Activated naive CD4-positive, alpha-beta T cell treated with anti-CD3 and anti-CD28 coated beads for 36 hours (primary cell): ENCODE measurements at regions of chr12 and their contacts with region 1.

Region 1: GRCh38 chr12:7859552-7859951 is 13.2 kb downstream of the SLC2A14 start:
- DNase-seq: no peak
- H3K4me3 Mint-ChIP-seq: no peak overlapping the region
- H3K27ac Mint-ChIP-seq: no peak overlapping the region
- H3K4me1 Mint-ChIP-seq: peaks cover 11% of the 10 kb centered on the region
- H3K27me3 Mint-ChIP-seq: no peaks in the 10 kb centered on the region

Region 2: DNA sequence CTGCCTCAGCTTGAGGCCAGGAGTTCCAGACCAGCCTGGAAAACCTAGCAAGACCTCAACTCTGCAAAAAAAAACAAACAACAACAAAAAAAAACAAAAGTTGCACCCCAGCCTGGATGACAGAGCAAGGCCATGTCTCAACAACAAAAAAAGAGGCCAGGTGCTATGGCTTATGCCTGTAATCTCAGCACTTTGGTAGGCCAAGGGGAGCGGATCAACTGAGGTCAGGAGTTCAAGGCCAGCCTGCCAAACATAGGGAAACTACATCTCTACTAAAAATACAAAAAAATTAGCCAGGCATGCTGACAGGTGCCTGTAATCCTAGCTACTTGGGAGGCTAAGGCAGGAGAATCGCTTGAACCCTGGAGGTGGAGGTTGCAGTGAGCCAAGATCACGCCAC is 19.7 kb after region 1 on chr12:
- CTCF ChIA-PET with region 1: no interaction called
- intact Hi-C with region 1: no loop called
- DNase-seq: no peak
- H3K4me3 Mint-ChIP-seq: no peak overlapping the region
- H3K27ac Mint-ChIP-seq: no peak overlapping the region
- H3K4me1 Mint-ChIP-seq: no peaks in the 10 kb centered on the region
- H3K27me3 Mint-ChIP-seq: no peaks in the 10 kb centered on the region

Region 3: GRCh38 chr12:7899755-7900154 is 40.2 kb after region 1 on chr12:
- CTCF ChIA-PET with region 1: interaction called, 10 read pairs
- intact Hi-C with region 1: no loop called
- DNase-seq: no peak
- H3K4me3 Mint-ChIP-seq: no peak overlapping the region
- H3K27ac Mint-ChIP-seq: no peak overlapping the region
- H3K4me1 Mint-ChIP-seq: no peaks in the 10 kb centered on the region
- H3K27me3 Mint-ChIP-seq: no peaks in the 10 kb centered on the region

Region 4: DNA sequence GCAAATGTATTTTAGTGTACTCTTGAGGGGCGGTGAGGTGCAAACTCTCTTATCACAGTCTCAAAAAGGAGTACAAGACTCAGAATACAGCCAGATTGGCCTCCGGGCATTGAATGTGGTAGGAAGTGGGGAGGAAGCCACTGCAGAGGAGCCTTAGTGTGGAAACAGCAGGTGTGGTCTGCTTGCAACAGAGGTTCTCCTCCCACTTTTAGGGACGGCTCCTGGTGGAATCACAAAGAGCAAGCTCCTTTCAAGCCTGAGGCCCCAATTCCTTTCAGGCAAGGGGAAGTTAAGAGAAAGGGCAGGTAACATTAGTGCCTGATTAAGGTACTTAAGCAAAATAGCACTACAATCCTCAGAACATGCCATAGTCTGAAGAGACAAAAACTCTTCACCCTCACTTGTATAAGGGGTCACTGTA is 100.2 kb after region 1 on chr12:
- CTCF ChIA-PET with region 1: interaction called, 4 read pairs
- intact Hi-C with region 1: loop called (anchors 1 kb)
- DNase-seq: peak; percentile 68
- H3K4me3 Mint-ChIP-seq: peak overlapping the region; percentile 86
- H3K27ac Mint-ChIP-seq: peak overlapping the region; percentile 93
- H3K4me1 Mint-ChIP-seq: peaks cover 37% of the 10 kb centered on the region
- H3K27me3 Mint-ChIP-seq: no peaks in the 10 kb centered on the region

Region 5: DNA sequence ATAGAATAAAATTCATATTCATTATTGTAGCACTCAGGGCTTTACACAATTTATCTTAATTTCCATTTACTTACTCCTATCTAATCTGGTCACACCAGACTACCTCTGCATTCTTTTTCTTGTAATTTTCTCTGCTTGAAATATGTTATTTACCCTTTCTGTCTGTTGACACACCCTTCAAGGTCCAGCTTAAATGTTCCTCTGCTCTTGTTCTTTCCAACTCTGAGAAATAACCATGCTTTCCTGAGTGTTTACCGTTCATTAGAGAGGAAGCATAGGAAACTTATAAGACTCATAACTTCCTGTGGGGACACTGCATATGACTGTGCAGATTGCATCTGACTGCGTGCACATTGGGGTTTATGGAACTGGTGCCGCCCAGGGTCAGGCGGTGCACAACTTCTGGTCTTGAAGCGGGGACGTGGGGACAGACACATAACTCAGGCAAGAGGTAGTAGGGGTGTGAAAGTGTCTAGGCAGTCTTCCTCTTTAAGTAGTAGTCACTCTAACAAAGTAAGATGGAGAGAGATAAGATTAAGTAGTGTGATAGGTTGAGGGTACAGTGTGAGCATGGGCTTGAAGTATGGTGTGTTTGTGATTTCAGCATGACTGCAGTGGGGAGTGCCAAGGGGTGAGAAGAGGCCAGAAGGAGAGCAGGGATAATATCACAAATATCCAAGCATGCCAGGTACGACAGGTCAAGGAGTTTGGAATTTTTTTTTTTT is 130.4 kb after region 1 on chr12:
- CTCF ChIA-PET with region 1: interaction called, 50 read pairs
- intact Hi-C with region 1: loop called (anchors 1 kb)
- DNase-seq: peak; percentile 84
- H3K4me3 Mint-ChIP-seq: peak overlapping the region; percentile 41
- H3K27ac Mint-ChIP-seq: peak overlapping the region; percentile 82
- H3K4me1 Mint-ChIP-seq: peaks cover 26% of the 10 kb centered on the region
- H3K27me3 Mint-ChIP-seq: no peaks in the 10 kb centered on the region

Region 6: GRCh38 chr12:7995266-7995963 is 135.9 kb after region 1 on chr12:
- CTCF ChIA-PET with region 1: interaction called, 50 read pairs
- intact Hi-C with region 1: loop called (anchors 1 kb)
- DNase-seq: peak; percentile 95
- H3K4me3 Mint-ChIP-seq: no peak overlapping the region
- H3K27ac Mint-ChIP-seq: no peak overlapping the region
- H3K4me1 Mint-ChIP-seq: peaks cover 13% of the 10 kb centered on the region
- H3K27me3 Mint-ChIP-seq: no peaks in the 10 kb centered on the region